ENCODE measurements at regions of chr17 and their contacts with region 1.

Region 1: DNA sequence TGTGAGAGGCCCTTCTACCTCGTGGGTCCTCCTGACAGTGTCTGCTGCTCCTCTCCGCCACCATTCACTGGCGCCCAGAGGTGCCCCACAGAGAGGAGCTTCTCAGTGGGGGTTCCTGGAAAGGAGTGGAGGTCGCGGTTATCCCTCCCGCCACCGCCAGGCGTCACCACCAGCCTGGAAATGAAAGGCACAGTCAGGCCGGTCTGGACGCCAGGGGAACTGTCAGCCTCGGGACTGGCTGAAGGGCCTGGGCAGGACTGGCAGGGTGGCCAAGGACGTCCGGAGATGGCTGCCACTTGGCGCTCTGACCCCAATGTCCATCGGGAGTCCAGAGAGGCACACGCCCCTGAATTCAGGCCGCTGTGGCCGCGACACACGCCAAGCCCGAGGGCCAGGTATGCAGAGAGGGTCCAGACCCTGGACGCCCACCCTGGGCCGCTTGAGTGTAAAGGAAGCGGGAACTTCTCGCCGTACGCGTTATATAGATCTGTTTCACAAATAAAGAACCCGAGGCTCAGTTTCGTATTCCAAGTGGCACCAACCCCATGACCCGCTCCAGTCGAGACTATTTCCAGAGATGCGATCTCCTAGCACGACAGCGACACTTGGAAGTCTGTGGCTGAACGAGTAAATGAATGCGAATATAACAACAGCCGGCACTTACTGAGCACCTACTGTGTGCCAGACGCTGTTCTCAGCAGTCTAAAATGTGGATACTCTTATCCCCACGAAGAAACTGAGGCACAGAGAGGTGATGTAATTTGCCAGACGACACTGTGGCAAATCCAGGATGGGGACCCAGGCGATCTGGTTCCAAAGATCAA is 7.6 kb upstream of the NXPH3 start:
- DNase-seq: peak; percentile 92 to 96
- H3K4me3 ChIP-seq: peak overlapping the region; percentile 49 to 51
- H3K27ac ChIP-seq: peak overlapping the region; percentile 83 to 90
- H3K4me1 ChIP-seq: peaks cover 0 to 49% (median 27%) of the 10 kb centered on the region in 4 donors
- H3K27me3 ChIP-seq: no peaks in the 10 kb centered on the region
- CTCF ChIP-seq: peak; percentile 93 to 100

Region 2: DNA sequence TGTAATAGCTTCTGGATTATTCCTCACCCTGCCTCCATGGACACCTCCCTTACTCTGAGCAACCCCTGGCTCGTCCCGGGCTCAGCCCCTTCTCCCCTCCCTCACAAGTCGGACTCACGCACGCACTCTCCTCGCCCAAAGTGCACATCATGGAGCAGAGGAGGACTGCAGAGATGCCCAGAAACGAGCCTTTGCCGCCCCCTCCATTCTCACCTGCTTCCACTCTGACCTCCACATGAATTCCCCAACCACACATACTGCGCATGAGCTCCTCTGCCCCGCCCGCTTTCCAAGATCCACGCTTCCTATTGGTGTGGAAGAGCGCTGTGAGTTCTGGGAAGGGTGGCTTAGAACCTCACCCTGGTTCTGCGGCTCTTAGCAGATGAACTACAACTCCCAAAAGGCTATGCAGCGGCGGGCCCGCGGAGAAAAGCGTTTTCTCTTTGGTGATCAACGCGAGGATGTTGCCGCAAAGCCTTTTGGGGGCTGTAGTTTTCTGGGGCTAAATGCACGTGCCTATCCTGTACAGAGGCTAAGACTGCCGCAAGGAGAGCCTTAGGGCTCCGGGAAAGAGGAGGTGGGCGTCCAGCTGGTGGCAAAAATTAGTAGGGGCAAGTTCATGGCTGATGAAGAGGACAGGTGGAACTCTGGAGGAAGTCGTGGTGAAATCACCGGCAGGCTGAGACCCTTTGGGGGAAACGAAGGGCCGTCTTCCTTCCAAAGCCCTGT is 153.3 kb before region 1 on chr17 and contains the start of gene PHB1:
- intact Hi-C with region 1: no loop called
- DNase-seq: peak; percentile 97 to 98
- H3K4me3 ChIP-seq: peak within 1 kb of the TSS; percentile 78 to 93
- H3K27ac ChIP-seq: peak within 1 kb of the TSS; percentile 53 to 72
- H3K4me1 ChIP-seq: peaks cover 0 to 20% (median 11%) of the 10 kb centered on the region in 4 donors
- H3K27me3 ChIP-seq: no peaks in the 10 kb centered on the region
- CTCF ChIP-seq: no peak

Region 3: DNA sequence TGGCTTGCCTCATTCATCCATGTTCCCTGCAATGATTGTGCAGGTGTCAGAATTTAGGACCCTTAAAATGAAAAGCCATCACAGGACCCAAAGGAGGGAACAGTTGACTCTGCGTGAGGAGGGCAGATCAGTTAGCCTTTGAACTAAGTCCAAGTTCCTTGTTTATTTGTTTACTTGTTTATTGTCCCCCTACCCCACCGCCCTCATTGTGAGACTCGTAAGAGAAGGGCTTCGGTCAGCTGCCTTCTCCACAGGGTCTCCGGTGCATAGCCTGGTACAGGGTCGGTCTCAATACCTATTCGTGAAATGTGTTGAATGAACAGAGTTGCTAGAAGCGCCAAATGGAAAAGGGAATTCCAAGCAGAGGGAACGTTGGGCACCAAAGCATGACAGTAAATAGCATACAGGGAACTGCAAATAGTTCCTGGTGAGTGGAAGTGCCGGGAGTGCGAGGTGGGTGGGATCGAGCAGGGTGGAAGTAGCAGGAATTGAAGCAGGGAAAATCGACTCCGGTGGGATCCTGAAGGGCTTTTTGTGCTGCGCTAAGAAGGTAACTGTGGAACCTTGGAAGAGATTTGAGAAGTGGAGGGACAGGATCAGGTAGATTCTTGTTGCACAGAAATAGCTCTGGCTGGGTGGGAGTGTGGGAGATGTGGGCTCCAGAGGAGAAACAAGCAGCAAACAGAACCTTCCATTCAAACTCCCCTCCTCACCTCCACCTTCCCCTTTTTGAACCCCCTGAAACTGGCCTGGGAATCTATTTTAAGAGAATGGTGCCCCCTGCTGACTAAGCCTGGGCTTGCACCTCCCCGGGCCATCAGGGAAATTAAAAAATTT is 127.0 kb after region 1 on chr17:
- intact Hi-C with region 1: loop called (anchors 2 kb)
- DNase-seq: peak in 1 of 2 donors; percentile 64
- H3K4me3 ChIP-seq: no peak overlapping the region
- H3K27ac ChIP-seq: peak overlapping the region; percentile 86 to 90
- H3K4me1 ChIP-seq: peaks cover 0 to 72% (median 38%) of the 10 kb centered on the region in 4 donors
- H3K27me3 ChIP-seq: no peaks in the 10 kb centered on the region
- CTCF ChIP-seq: peak; percentile 94 to 98

Region 4: DNA sequence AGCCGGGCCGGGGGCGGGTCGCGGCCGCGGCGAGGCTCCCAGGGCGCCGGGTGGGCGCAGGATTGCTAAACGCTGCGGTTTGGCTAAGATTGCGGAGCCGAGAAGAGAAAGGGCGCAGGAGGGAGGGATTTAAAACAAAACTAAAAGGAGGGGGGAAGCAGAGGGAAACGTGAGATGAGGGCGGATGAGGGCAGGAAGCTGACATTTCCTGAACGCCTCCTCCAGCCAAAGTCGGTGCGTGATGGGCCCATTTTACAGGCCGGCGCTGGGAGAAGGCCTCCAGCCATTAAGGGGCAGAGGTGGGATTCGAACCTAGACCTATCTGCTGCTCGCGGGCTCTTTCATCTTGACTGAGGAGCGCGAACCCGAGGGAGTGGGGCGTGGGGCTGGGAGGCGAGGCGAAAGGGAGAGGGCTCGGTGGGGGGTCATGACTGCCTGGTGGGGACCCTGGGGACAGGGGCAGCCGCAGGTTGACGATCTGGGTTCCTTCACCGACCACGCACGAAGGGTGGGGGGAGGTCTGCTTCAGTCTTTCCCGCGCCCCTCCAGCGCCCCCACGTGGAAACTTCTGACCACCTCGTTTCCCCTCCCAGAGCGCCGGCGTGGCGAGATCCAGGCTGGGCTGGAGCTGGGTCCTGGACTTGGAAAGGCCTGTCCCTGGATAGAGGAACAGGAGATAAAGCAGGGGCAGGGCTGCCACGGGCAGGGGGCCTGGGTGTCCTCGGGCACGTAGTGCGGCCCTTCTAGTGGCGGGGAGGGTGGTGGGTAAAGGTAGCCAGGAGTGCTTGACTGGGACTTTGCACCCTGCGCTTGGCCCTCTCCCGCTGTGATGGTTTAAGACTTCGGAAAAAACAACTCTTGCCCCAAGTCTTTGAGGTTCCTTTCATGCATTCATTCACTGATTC is 283.6 kb after region 1 on chr17:
- intact Hi-C with region 1: loop called (anchors 5 kb)
- DNase-seq: peak; percentile 71 to 87
- H3K4me3 ChIP-seq: peak overlapping the region; percentile 55 to 64
- H3K27ac ChIP-seq: peak overlapping the region; percentile 51 to 60
- H3K4me1 ChIP-seq: peaks cover 0 to 22% (median 12%) of the 10 kb centered on the region in 4 donors
- H3K27me3 ChIP-seq: no peaks in the 10 kb centered on the region
- CTCF ChIP-seq: peak; percentile 76 to 78

Region 5: GRCh38 chr17:51472670-51473205 is 1904.7 kb after region 1 on chr17:
- intact Hi-C with region 1: no loop called
- DNase-seq: no peak
- H3K4me3 ChIP-seq: no peak overlapping the region
- H3K27ac ChIP-seq: no peak overlapping the region
- H3K4me1 ChIP-seq: no peaks in the 10 kb centered on the region
- H3K27me3 ChIP-seq: no peaks in the 10 kb centered on the region
- CTCF ChIP-seq: no peak